Left ventricle myocardium inferior (tissue), 1 donor: ENCODE measurements at regions of chr12 and their contacts with region 1.

Region 1: DNA sequence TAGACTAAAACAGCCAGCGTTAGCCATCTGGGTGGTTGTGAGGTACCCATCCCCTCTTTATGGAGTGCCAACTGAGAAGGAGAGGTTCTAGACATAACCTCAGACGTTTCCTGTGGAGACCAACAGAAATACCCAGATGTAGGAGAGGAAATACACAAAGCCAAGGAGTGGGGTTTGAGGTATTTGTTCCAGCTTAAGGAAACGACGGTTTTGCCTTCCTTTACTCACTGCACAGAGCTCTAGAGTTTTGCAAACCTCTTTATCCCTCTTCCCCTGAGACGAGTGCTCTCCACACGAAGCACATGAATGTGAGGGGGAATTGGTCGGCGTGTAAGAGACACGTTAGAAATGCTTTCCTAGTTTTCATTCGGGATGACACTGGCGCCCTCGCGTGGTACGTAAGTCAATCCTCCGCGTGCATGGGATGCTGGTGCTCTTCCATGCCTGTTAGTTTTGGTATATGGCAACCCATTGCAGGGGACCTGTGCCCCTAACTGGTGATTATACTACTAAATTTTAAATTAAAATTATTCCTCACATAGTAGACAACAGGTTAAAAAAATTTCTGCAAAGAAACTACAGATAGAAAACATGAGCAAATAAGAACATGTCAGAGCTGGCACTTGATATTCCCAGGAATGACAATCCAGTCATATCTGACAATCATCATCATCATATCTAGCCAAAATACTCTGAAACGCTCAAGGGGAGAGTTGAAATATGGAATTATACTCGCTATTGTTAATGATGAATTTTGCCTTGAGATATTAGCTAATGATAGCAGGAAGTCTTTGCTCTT is 121.7 kb downstream of the PPM1H start:
- DNase-seq: peak; percentile 68
- H3K4me3 ChIP-seq: peak overlapping the region; percentile 32
- H3K27ac ChIP-seq: no peak overlapping the region
- H3K4me1 ChIP-seq: peaks cover 22% of the 10 kb centered on the region
- H3K27me3 ChIP-seq: no peaks in the 10 kb centered on the region
- CTCF ChIP-seq: peak; percentile 82

Region 2: DNA sequence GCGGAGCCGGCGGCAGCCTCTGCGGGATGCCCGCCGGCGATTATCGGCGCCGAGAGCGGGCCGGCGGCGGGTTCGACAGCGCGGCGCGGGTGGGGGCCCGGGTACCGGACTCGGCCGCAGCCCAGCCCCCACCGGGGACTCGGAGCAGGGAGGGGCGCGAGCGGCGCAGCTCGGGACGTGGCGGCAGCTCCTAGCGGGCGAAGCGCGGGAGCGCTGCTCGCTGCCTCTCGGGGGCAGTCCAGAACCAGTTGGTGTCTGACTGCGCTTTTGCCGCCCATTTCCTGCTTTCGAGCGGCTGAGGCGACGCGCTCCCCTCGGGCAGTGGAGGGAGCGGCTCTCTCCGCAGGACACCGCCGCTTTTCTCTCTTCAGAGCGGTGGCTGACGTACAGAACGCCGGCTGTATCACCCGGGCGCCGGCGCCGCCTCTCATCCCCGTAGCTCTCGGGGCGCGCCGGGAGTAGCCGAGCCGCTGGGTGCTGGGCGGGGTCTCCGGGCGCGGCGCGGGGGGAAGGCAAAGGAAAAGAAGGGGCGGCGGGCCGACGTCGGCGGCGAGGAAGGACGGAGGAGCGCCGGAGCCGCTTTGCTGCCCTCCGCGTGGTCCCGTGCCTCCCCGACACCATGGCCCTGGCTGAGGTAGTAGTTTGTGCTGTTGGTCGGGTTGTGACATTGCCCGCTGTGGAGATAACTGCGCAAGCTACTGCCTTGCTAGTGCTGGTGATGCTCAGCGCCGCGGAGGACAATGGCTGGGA is 210.0 kb before region 1 on chr12:
- intact Hi-C with region 1: no loop called
- DNase-seq: peak; percentile 87
- H3K4me3 ChIP-seq: peak overlapping the region; percentile 86
- H3K27ac ChIP-seq: peak overlapping the region; percentile 100
- H3K4me1 ChIP-seq: peaks cover 39% of the 10 kb centered on the region
- H3K27me3 ChIP-seq: no peaks in the 10 kb centered on the region
- CTCF ChIP-seq: peak; percentile 71

Region 3: DNA sequence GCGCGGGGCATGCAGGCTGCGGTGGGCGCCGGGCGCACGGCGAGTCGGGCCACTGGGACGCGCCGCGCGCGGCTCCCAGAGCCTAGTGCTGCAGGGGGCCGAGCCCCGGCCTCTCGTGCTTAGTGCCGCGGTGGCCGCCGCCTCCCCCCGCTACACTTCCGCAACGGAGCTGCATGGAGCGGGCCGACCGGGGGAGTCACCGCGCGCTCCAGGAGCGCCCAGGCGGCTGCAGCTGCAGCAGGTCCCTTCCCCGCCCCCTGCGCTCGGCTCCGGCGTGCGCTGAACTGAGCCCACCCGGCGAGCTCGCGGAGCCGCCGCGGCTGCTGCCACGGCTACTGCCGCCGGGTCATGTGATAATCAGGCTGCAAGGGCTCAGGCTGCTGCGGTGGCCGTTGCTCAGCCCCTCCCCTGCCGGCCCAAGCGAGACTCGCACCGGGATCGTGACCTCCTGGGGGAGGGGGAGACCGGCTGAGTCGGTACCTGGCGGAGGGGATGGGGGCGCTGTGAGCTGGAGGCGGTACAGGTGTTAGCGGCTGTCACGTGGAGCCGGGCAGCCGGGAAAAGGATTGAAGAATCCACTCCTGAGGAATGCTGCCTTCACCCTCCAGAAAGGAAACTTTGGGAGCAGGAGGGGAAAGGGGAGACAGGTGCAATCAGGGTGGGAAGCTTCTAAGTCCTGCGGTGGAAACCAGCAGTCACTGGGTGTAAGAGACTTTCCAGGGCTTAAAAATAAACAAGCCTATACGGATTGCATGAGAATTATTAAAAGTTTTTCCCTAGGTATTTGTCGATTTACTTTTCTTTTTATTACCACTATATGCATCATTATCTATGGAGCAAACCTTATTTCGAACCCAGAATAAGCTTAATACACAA is 121.8 kb after region 1 on chr12 and contains the start of gene PPM1H:
- intact Hi-C with region 1: loop called (anchors 5 kb)
- DNase-seq: peak; percentile 76
- H3K4me3 ChIP-seq: peak within 1 kb of the TSS; percentile 79
- H3K27ac ChIP-seq: peak within 1 kb of the TSS; percentile 91
- H3K4me1 ChIP-seq: peaks cover 39% of the 10 kb centered on the region
- H3K27me3 ChIP-seq: no peaks in the 10 kb centered on the region
- CTCF ChIP-seq: peak; percentile 73
- total RNA-seq, gene PPM1H: 6.0 TPM

Region 4: GRCh38 chr12:63068857-63069442 is 255.7 kb after region 1 on chr12:
- intact Hi-C with region 1: loop called (anchors 10 kb)
- DNase-seq: no peak
- H3K4me3 ChIP-seq: no peak overlapping the region
- H3K27ac ChIP-seq: peak overlapping the region; percentile 40
- H3K4me1 ChIP-seq: peaks cover 9% of the 10 kb centered on the region
- H3K27me3 ChIP-seq: no peaks in the 10 kb centered on the region
- CTCF ChIP-seq: peak; percentile 63